ENCODE measurements at regions of chr10 and their contacts with region 1.

Region 1: GRCh38 chr10:59906417-59907202 is at the start of gene CCDC6:
- DNase-seq: peak; percentile 95
- H3K4me3 Mint-ChIP-seq: peak within 1 kb of the TSS; percentile 91
- H3K27ac Mint-ChIP-seq: peak within 1 kb of the TSS; percentile 96
- H3K4me1 Mint-ChIP-seq: peaks cover 59% of the 10 kb centered on the region
- H3K27me3 Mint-ChIP-seq: no peaks in the 10 kb centered on the region
- total RNA-seq, gene CCDC6: 49.1 to 51.5 TPM

Region 2: GRCh38 chr10:58384999-58385783 is 1521.4 kb before region 1 on chr10 and contains the start of gene TFAM:
- CTCF ChIA-PET with region 1: no interaction called
- POLR2A ChIA-PET with region 1: no interaction called
- intact Hi-C with region 1: loop called (anchors 5 kb)
- DNase-seq: peak; percentile 99
- H3K4me3 Mint-ChIP-seq: peak within 1 kb of the TSS; percentile 99
- H3K27ac Mint-ChIP-seq: peak within 1 kb of the TSS; percentile 92
- H3K4me1 Mint-ChIP-seq: peaks cover 37% of the 10 kb centered on the region
- H3K27me3 Mint-ChIP-seq: no peaks in the 10 kb centered on the region
- total RNA-seq, gene TFAM: 85.4 to 92.5 TPM

Region 3: GRCh38 chr10:59133841-59134593 is 772.6 kb before region 1 on chr10:
- CTCF ChIA-PET with region 1: no interaction called
- POLR2A ChIA-PET with region 1: no interaction called
- intact Hi-C with region 1: no loop called
- DNase-seq: no peak
- H3K4me3 Mint-ChIP-seq: no peak overlapping the region
- H3K27ac Mint-ChIP-seq: no peak overlapping the region
- H3K4me1 Mint-ChIP-seq: no peaks in the 10 kb centered on the region
- H3K27me3 Mint-ChIP-seq: no peaks in the 10 kb centered on the region

Region 4: GRCh38 chr10:59808896-59809643 is 97.5 kb before region 1 on chr10:
- CTCF ChIA-PET with region 1: interaction called, 14 read pairs
- POLR2A ChIA-PET with region 1: no interaction called
- intact Hi-C with region 1: loop called (anchors 5 kb)
- DNase-seq: peak; percentile 84
- H3K4me3 Mint-ChIP-seq: no peak overlapping the region
- H3K27ac Mint-ChIP-seq: no peak overlapping the region
- H3K4me1 Mint-ChIP-seq: peaks cover 3% of the 10 kb centered on the region
- H3K27me3 Mint-ChIP-seq: no peaks in the 10 kb centered on the region

Region 5: DNA sequence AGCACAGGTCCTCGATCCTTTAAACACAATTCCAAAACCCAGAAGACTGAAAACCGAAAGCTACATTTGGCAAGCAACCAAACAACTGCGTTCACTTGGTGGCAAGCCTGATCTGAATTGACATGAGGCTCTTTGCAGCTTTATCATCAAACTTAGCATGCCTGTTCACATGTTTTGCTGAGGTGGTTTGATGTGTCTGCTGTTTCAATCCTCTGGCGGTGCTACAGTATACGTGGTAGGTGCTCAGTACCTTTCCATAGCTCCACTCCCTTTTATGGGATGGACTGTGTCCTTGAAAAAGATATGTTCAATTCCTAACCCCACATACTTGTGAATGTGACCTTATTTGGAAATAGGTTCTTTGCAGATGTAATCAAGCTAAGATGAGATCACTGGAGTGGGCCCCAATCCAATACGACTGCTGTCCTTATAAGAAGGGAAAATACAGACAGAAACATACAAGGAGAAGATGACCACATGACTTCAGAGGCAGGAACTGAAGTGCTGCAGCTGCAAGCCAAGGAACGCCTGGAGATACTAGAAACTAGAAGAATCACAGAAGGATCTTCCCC is 33.6 kb before region 1 on chr10:
- CTCF ChIA-PET with region 1: interaction called, 69 read pairs
- POLR2A ChIA-PET with region 1: interaction called, 46 read pairs
- intact Hi-C with region 1: no loop called
- DNase-seq: no peak
- H3K4me3 Mint-ChIP-seq: no peak overlapping the region
- H3K27ac Mint-ChIP-seq: no peak overlapping the region
- H3K4me1 Mint-ChIP-seq: peaks cover 82% of the 10 kb centered on the region
- H3K27me3 Mint-ChIP-seq: no peaks in the 10 kb centered on the region

Region 6: DNA sequence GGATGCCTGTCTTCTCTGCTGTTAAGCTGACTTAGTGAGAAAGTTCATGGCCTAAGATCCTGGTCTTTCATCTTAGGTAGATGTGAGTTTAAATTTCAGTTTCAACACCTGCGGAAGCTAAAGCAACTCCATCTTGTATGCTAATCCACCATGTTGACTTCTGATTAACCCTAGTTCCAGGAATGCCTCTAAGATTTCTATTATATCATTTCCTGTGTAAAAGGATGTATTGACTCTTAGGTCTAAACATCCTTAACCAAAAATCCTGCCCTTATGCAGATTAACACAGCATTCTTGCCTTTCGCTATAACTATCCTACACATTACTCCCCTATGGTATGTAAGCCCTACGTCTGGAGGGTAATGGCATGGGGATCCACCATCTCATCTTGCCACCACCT is 94.1 kb after region 1 on chr10:
- CTCF ChIA-PET with region 1: no interaction called
- POLR2A ChIA-PET with region 1: interaction called, 3 read pairs
- intact Hi-C with region 1: loop called (anchors 1 kb)
- DNase-seq: peak; percentile 12
- H3K4me3 Mint-ChIP-seq: no peak overlapping the region
- H3K27ac Mint-ChIP-seq: peak overlapping the region; percentile 55
- H3K4me1 Mint-ChIP-seq: peaks cover 18% of the 10 kb centered on the region
- H3K27me3 Mint-ChIP-seq: peaks cover 3% of the 10 kb centered on the region

Region 7: DNA sequence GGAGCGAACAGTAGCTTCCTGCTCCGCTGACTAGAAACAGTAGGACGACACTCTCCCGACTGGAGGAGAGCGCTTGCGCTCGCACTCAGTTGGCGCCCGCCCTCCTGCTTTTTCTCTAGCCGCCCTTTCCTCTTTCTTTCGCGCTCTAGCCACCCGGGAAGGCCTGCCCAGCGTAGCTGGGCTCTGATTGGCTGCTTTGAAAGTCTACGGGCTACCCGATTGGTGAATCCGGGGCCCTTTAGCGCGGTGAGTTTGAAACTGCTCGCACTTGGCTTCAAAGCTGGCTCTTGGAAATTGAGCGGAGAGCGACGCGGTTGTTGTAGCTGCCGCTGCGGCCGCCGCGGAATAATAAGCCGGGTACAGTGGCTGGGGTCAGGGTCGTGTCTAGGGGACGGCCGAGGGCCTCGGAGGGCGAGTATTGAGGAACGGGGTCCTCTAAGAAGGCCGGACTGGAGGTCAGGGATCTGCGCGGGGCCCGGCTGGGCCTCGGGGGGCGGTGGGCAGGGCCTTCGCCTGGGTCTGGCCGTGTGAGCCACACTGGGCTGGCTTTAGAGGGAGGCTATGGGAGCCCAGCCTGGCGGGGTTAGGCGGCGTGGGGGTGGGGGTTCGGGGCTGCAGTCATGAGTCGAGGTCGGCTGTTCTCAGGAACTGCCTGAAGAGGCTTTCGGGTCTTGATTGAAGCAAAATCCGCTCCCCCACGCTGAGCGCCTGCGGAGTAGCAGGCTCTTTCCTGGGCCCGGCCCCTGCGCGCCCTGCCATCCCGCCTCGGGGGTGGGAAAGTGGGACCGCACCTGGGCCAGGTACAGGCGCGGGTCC is 871.8 kb after region 1 on chr10 and contains the start of gene CDK1:
- CTCF ChIA-PET with region 1: no interaction called
- POLR2A ChIA-PET with region 1: interaction called, 3 read pairs
- intact Hi-C with region 1: loop called (anchors 5 kb)
- DNase-seq: peak; percentile 98
- H3K4me3 Mint-ChIP-seq: peak within 1 kb of the TSS; percentile 91
- H3K27ac Mint-ChIP-seq: peak within 1 kb of the TSS; percentile 92
- H3K4me1 Mint-ChIP-seq: peaks cover 19% of the 10 kb centered on the region
- H3K27me3 Mint-ChIP-seq: no peaks in the 10 kb centered on the region
- total RNA-seq, gene CDK1: 153 TPM

Measured in activated CD4-positive, alpha-beta memory T cell treated with anti-CD3 and anti-CD28 coated beads for 36 hours (primary cell).